Testis (tissue), 5 donors: ENCODE measurements at regions of chr6 and their contacts with region 1.

Region 1: GRCh38 chr6:53484476-53485280 is 60.2 kb downstream of the GCLC start:
- DNase-seq: peak; percentile 96
- H3K4me3 ChIP-seq: peak overlapping the region; percentile 1 to 2
- H3K27ac ChIP-seq: no peak overlapping the region
- H3K4me1 ChIP-seq: peaks cover 3% of the 10 kb centered on the region
- H3K27me3 ChIP-seq: no peaks in the 10 kb centered on the region
- CTCF ChIP-seq: peak; percentile 96 to 98 (median 96)
- POLR2A ChIP-seq: no peak

Region 2: DNA sequence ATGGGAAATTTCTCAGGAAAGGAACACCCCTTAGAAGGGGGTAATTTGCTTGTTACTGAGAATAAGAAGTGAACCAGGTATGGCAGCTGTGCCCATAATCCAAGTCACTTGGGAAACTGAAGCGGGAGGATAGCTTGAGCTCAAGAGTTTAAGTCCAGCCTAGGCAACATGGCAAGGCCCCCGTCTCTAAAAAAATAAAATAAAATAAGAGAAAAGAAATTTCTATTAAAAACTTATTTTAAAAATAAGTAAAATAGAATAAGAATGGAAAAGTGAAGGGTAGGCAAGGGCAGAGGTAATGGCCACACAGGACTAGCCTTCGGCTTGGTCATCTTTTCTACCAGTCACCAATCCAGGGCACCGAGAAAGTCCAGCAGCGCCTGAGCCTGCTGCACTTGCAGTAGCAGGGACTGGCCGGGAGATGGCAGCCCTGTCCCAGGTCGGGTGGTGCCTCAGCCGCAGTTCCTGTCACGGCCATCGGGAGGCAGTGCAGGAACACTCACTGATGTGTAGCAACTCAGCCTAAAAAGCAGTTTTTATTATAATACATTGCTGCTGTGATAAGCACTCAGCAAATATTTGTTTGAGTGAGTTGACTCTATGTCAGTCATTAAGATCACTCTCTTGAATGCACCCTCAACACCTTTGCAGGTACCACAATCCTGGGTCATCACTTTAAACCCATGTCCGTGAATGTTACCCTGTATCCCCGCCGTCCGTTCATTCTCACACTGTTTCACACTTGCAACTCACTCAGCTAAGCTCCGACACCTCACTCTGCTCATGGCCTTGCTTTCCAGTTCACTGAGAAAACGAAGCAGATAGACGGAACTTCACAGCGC is 312.9 kb before region 1 on chr6:
- intact Hi-C with region 1: loop called (anchors 5 kb)
- DNase-seq: peak; percentile 95
- H3K4me3 ChIP-seq: no peak overlapping the region
- H3K27ac ChIP-seq: peak overlapping the region in 1 of 2 donors; percentile 50
- H3K4me1 ChIP-seq: peaks cover 13% of the 10 kb centered on the region
- H3K27me3 ChIP-seq: no peaks in the 10 kb centered on the region
- CTCF ChIP-seq: peak; percentile 100
- POLR2A ChIP-seq: no peak